ENCODE measurements at regions of chr7 and their contacts with region 1.

Region 1: DNA sequence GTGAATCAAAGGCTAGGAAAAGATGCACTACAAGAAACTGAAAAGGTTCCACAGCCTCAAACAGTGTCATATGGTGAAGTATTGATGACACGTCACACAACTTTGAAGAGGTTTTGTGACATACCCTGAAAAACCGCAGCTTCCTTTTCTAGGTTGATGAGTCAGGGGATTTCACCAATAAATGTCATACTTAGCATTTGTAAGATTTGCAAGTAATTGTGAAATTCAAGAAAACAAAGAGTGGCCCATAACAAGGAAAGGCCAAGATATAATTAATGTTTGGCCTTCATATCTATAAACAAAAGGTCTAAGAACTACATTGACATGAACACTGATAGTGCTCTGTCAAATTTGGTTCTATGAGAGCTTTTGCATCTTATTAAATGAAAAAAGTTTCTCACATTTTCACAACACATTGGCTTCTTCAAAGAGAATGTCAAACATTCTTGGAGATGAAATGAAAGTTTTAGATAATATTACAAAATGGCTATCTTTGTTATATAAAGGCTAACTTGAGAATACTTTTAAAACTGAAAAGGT is 62.0 kb upstream of the NAMPT start:
- DNase-seq: peak; percentile 76
- H3K4me3 Mint-ChIP-seq: peak overlapping the region; percentile 63
- H3K27ac Mint-ChIP-seq: peak overlapping the region; percentile 99
- H3K4me1 Mint-ChIP-seq: peaks cover 53% of the 10 kb centered on the region
- H3K27me3 Mint-ChIP-seq: peaks cover 1% of the 10 kb centered on the region

Region 2: DNA sequence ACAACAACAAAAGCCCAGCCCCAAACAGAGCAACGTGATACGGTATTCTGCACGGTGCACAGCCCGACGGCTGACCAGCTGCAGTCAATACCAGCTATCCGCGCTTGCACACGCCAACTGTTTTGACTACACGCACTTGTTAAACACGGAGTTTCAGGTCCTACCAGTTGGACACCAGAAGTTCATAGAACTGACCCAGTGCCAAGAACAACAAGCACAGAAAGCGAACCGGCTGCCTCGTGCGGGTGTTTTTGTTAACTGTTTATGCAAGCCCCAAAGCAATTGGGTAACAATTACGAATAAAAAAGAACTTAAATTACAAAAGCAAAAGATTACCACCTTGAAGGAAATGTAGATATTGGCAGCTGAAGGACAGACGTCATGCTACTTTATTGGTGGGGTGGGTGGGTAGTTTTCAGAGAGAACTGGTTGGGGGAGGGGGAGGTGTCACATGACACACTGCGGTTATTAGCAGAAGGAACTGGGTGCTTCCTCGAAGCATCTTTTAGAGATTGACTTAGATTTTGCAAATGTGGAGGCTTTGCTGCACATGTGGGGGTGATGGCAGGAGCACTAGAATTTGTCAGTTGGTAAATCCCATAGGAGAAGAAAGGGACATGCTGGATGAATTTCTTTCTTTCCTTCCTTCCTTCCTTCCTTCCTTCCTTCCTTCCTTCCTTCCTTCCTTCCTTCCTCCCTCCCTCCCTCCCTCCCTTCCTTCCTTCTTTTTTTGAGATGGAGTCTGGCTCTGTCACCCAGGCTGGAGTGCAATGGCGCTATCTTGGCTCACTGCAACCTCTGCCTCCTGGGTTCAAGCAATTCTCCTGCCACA is 654.8 kb before region 1 on chr7:
- intact Hi-C with region 1: loop called (anchors 1 kb)
- DNase-seq: no peak
- H3K4me3 Mint-ChIP-seq: peak overlapping the region; percentile 89
- H3K27ac Mint-ChIP-seq: peak overlapping the region; percentile 89
- H3K4me1 Mint-ChIP-seq: peaks cover 35% of the 10 kb centered on the region
- H3K27me3 Mint-ChIP-seq: no peaks in the 10 kb centered on the region

Region 3: GRCh38 chr7:106329971-106330733 is 16.6 kb before region 1 on chr7:
- intact Hi-C with region 1: loop called (anchors 1 kb)
- DNase-seq: no peak
- H3K4me3 Mint-ChIP-seq: peak overlapping the region; percentile 29
- H3K27ac Mint-ChIP-seq: peak overlapping the region; percentile 14
- H3K4me1 Mint-ChIP-seq: peaks cover 19% of the 10 kb centered on the region
- H3K27me3 Mint-ChIP-seq: peaks cover 2% of the 10 kb centered on the region

Region 4: GRCh38 chr7:106377847-106378361 is 31.2 kb after region 1 on chr7:
- intact Hi-C with region 1: no loop called
- DNase-seq: no peak
- H3K4me3 Mint-ChIP-seq: no peak overlapping the region
- H3K27ac Mint-ChIP-seq: no peak overlapping the region
- H3K4me1 Mint-ChIP-seq: peaks cover 19% of the 10 kb centered on the region
- H3K27me3 Mint-ChIP-seq: no peaks in the 10 kb centered on the region

Region 5: GRCh38 chr7:106418094-106418493 is 71.3 kb after region 1 on chr7:
- intact Hi-C with region 1: loop called (anchors 1 kb)
- DNase-seq: no peak
- H3K4me3 Mint-ChIP-seq: peak overlapping the region; percentile 5
- H3K27ac Mint-ChIP-seq: peak overlapping the region; percentile 73
- H3K4me1 Mint-ChIP-seq: peaks cover 55% of the 10 kb centered on the region
- H3K27me3 Mint-ChIP-seq: peaks cover 3% of the 10 kb centered on the region

Region 6: DNA sequence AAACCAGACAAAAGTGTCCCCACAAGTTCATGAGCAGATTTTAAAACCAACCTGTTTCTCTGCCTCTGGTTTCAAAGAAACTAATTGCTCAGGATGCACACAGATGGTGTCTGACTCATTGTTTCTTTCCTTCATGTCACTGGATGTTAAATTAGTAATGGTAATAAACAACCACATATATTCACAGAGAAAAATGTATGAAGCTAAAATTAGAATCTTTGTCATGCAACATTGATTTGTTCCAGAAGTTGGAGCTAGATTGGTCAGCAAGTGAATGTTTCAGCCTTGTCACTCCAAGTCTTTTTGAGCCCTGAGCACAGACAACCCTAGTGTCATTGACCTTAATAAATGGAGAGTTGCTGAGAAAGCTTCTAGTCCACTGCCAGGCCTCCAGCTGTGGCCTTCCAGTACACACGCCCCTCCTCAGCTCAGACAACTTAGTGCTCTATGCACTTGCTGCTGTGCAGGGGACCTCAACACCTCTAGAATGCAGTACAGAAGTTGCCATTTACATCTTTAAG is 138.3 kb after region 1 on chr7:
- intact Hi-C with region 1: loop called (anchors 1 kb)
- DNase-seq: no peak
- H3K4me3 Mint-ChIP-seq: peak overlapping the region; percentile 19
- H3K27ac Mint-ChIP-seq: peak overlapping the region; percentile 81
- H3K4me1 Mint-ChIP-seq: peaks cover 41% of the 10 kb centered on the region
- H3K27me3 Mint-ChIP-seq: no peaks in the 10 kb centered on the region

Region 7: DNA sequence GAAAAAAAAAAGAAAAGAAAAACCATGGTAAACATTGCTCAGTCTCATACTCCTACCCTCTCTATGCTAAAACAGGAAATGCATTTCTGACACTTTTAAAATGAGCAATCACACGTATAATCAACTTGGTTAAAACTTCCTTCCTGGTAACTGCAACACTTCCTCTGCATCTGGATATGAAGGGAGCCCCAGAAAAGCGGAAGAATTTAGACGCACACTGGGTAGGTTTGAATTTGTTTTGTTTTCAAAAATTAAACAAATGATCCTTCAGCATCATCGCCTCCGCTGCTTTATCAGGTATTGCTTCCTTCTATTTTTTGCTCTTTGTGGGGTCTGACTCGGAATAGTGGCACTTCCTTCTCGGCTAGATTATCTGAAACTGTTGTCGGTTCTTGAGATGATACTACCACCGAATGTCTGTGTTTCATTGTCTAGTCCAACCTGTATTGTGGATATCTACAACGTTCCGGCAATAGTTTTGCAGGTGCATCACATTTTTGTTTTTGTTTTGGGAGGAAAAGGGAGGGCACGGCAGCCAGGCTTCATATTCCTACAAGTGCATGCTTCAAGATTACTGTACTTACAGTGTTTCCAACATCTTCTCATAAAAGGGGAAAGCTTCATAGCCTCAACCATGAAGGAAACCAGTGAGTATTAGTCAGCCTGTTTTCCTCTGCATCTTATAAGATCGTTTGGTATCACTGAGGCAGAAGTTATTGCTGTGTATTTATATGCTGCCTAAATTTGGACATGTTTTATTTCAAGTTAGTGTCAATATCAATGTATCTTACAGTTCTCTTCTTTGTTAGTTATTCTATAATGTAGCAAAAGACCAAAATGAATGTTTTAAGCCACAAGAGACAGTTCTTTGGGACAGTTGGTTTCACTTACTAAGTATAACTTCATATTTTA is 518.6 kb after region 1 on chr7 and contains the start of gene PIK3CG:
- intact Hi-C with region 1: loop called (anchors 2 kb)
- DNase-seq: peak; percentile 22
- H3K4me3 Mint-ChIP-seq: peak within 1 kb of the TSS; percentile 96
- H3K27ac Mint-ChIP-seq: peak within 1 kb of the TSS; percentile 90
- H3K4me1 Mint-ChIP-seq: peaks cover 55% of the 10 kb centered on the region
- H3K27me3 Mint-ChIP-seq: no peaks in the 10 kb centered on the region
- total RNA-seq, gene PIK3CG: 38.7 and 39.3 TPM in 2 replicates